Posterior vena cava (tissue), 2 donors: ENCODE measurements at regions of chr1 and their contacts with region 1.

Region 1: DNA sequence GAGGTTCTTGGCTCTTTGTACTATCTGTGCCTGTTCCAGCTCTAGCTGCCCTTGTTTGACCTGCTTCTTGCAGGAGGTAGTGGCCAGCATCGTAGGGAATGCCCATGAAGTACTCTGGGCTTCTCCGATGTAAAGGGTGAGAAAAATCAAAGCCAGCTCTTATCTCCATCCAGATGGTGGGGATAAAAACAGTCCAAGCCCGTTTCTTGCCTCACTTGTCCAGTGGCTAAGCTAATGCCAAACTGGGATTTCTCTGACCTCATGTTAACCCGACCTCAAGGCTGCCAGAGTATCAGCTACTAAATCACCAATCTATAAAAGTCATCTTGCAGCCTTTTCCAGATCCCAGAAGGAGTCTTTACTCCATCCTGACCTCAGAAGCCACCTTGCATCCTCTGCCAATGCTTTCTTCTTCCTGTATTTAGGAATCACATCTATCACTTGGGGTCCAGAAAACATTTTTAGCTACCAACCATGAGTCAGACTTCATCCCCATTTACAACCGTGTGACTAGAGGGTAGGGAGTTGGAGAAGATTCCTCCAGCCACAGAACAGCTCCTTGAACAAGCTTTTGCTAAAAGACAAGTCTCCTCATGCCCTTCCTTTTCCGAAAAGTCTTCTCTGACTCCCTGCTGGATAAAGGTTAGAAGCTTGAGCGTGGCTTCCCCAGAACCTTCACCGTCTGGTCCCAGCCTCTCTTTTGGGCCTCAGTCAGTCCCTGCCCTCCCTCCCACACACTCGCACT is 35.9 kb downstream of the KCNC4 start:
- DNase-seq: no peak

Region 2: DNA sequence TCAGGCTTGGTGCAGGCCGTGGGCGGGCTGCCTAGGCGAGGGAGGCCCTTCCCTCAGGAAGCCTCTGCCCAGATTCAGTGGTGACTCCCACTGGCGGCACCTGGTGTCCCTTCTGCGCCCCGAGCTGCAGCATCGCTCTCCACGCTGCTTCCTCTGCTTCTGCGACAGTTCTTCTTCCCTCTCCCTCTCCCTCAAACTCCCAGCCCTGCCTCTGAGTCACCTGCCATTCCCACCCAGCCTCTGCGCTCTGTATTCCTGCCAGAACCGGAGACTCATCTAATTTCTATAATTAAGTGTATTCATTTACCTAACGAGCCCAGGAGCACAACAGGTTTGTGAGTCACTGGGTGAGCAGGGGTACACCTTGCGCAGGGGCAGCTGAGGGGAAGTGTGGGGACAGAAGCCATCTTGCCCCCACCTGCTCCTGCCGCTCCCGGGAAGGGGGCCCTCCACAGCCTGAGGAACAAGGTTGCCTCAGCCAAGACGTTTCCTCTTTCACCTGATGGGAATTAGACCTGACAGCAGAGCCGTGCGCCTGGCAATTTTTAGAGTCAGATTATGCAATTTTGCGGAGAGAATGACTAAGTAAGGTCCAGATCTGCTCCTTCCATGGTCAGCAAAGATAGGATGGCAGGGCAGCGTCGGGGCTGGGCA is 16.6 kb before region 1 on chr1:
- intact Hi-C with region 1: loop called in 1 of 2 experiments (anchors 1 kb)
- DNase-seq: no peak

Region 3: DNA sequence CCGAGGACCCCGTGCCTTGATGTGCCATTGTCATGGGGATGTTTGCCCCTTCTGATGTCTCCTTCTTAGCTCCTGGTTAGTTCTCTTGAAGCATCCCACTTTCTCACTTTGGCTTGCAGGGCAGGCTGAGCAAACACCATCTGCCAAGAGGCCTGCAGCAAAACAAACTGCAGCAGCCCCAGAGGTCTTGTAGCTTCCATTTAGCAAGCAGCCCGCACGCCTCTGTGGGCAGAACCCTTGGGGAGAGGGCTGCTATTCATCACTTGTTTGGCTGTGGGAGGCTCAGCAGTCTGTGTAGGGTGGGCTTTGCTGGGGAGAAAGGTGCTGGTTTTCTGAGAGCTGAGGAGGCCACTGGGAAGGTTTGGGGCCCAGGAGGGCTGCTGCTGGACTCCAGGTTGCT is 20.8 kb after region 1 on chr1:
- intact Hi-C with region 1: loop called in 1 of 2 experiments (anchors 1 kb)
- DNase-seq: no peak